ENCODE measurements at regions of chr18 and their contacts with region 1.

Region 1: DNA sequence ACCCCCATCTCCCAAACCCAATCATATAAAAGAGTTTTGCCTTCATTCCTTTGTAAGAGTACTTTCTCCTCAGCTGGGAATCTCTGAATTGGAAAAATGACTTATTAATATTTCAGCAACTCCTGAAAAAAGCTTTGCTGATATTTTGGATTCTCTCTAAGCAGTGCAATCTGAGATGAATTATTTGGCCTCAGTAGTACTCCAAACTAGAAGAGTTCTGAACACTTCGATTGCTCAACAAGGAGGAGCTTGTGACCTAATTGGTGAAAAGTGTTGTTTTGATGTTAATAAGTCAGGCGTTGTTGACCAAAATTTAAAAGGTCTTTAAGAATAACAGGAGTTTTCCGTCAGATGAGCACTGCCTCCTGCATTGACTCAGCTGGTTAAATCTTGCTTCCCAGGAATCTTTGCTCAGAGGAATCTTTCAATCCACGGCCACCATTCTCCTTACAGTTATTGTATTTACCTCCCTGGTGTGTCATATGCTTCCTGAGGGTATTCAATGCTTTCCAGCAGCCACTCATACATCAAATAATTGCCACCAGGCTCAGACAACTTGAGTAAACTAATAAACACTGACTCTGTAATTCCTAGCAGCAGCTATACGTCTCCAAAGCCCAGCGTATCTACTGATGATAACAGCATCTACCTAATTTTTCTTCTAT is 24.5 kb upstream of the LIPG start:
- DNase-seq: no peak
- ATAC-seq: peak; percentile 86
- H3K4me3 ChIP-seq: no peak overlapping the region
- H3K27ac ChIP-seq: no peak overlapping the region
- H3K4me1 ChIP-seq: peaks cover 4% of the 10 kb centered on the region; the same call in 1 of the 2 replicates
- H3K27me3 ChIP-seq: no peaks in the 10 kb centered on the region
- CTCF ChIP-seq: no peak

Region 2: GRCh38 chr18:49376046-49376445 is 161.3 kb before region 1 on chr18:
- CTCF ChIA-PET with region 1: no interaction called
- POLR2A ChIA-PET with region 1: no interaction called
- in situ Hi-C with region 1: no loop called
- intact Hi-C with region 1: no loop called
- DNase-seq: no peak
- ATAC-seq: no peak
- H3K4me3 ChIP-seq: no peak overlapping the region
- H3K27ac ChIP-seq: no peak overlapping the region
- H3K4me1 ChIP-seq: no peaks in the 10 kb centered on the region
- H3K27me3 ChIP-seq: no peaks in the 10 kb centered on the region
- CTCF ChIP-seq: no peak

Region 3: DNA sequence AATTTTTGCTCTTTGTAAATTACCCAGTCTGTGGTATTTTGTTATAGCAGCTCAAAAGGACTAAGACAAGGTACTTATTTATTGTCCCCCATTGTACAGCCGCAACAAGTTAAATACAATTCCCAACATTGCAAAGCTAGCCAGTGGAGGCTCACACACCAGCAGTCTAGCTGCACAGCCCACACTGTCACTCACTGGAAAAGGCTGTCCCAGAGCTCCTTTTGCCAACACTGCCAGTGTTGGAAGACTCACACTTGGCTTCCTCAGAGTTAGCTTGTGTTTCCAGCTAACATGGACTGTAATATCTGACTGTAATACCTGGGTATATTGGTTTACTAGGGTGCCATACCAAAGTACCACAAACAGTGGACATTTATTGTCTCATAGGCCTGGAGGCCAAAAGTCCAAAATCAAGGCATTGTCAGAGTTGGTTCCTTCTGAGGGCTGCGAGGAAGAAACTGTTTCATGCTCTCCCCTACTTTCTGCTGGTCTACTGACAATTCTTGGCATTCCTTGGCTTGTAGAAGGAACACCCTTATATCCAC is 70.3 kb before region 1 on chr18:
- CTCF ChIA-PET with region 1: interaction called, 10 read pairs
- POLR2A ChIA-PET with region 1: no interaction called
- in situ Hi-C with region 1: no loop called
- intact Hi-C with region 1: no loop called
- DNase-seq: no peak
- ATAC-seq: no peak
- H3K4me3 ChIP-seq: no peak overlapping the region
- H3K27ac ChIP-seq: no peak overlapping the region
- H3K4me1 ChIP-seq: no peaks in the 10 kb centered on the region
- H3K27me3 ChIP-seq: no peaks in the 10 kb centered on the region
- CTCF ChIP-seq: no peak